Heart left ventricle (tissue), 16 donors: ENCODE measurements at regions of chr11 and their contacts with region 1.

Region 1: GRCh38 chr11:8964324-8965320 is at the start of gene TMEM9B:
- DNase-seq: peak; percentile 92 to 96 (median 95)
- ATAC-seq: peak; percentile 90 to 97 (median 96)
- H3K4me3 ChIP-seq: peak within 1 kb of the TSS; percentile 61 to 97 (median 80)
- H3K27ac ChIP-seq: peak within 1 kb of the TSS; percentile 88 to 99 (median 95)
- H3K4me1 ChIP-seq: peaks cover 0 to 37% (median 25%) of the 10 kb centered on the region in 12 donors
- H3K27me3 ChIP-seq: no peaks in the 10 kb centered on the region
- CTCF ChIP-seq: no peak
- POLR2A ChIP-seq: peak in 1 of 2 donors; percentile 86
- total RNA-seq, gene TMEM9B: 39.9 to 58.3 (median 46.5) TPM

Region 2: GRCh38 chr11:8682303-8683114 is 282.1 kb before region 1 on chr11 and contains the starts of genes RPL27A and TRIM66:
- intact Hi-C with region 1: loop called in 9 of 10 experiments (anchors 5 to 10 kb)
- DNase-seq: peak; percentile 99
- ATAC-seq: peak; percentile 97 to 99 (median 98)
- H3K4me3 ChIP-seq: peak within 1 kb of the TSS; percentile 58 to 100 (median 90)
- H3K27ac ChIP-seq: peak within 1 kb of the TSS; percentile 91 to 98 (median 96)
- H3K4me1 ChIP-seq: peaks cover 0 to 34% (median 22%) of the 10 kb centered on the region in 12 donors
- H3K27me3 ChIP-seq: no peaks in the 10 kb centered on the region
- CTCF ChIP-seq: peak in 6 of 12 donors; percentile 7 to 26 (median 13)
- POLR2A ChIP-seq: peak; percentile 51 to 97
- total RNA-seq, gene RPL27A: 299 to 597 (median 438) TPM
- total RNA-seq, gene TRIM66: 0.71 to 10.1 (median 4.1) TPM

Region 3: GRCh38 chr11:8870411-8871170 is 94.0 kb before region 1 on chr11:
- intact Hi-C with region 1: loop called in 1 of 10 experiments (anchors 2 kb)
- DNase-seq: peak; percentile 56 to 76 (median 69)
- ATAC-seq: peak; percentile 32 to 87 (median 74)
- H3K4me3 ChIP-seq: peak overlapping the region; percentile 43 to 97 (median 83)
- H3K27ac ChIP-seq: peak overlapping the region; percentile 43 to 94 (median 84)
- H3K4me1 ChIP-seq: peaks cover 0 to 55% (median 15%) of the 10 kb centered on the region in 12 donors
- H3K27me3 ChIP-seq: peaks cover 0 to 30% (median 0%) of the 10 kb centered on the region in 9 donors
- CTCF ChIP-seq: peak in 1 of 12 donors; percentile 23
- POLR2A ChIP-seq: no peak

Region 4: DNA sequence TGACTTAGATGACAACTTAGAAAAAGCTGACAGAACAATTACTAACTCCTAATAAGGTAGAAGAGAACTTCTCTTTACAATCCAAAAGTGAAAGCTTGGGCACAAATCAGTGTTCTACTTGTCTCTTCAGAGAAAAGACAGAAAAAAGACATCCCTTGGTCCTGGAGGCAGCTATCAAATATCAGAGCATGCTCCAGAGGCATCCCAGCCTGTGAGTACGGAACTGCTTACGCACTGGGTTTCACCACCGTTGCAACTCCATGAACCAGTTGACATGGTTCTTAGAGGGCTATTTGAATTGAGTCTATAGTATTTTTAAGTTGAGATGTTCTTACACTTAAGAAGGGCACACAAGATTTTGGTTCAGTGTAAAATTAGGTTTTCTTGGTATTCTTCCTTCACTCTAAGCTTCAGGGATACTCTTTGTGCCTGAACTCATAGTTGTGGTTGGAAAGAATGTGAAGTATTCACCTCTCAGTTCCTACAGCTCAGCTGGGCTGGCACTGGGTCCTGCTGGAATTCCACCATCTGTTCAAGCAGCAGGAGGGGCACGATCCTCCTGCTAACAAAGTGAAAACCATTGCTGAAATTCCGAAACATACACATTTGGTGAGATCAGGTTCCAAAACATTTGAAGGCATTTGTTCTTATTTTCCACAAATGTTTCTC is 47.3 kb before region 1 on chr11:
- intact Hi-C with region 1: loop called in 9 of 10 experiments (anchors 2 to 5 kb)
- DNase-seq: peak in 1 of 5 donors; percentile 36
- ATAC-seq: peak in 3 of 4 donors; percentile 39 to 64 (median 59)
- H3K4me3 ChIP-seq: no peak overlapping the region
- H3K27ac ChIP-seq: peak overlapping the region in 7 of 12 donors; percentile 3 to 49 (median 27)
- H3K4me1 ChIP-seq: peaks cover 0 to 41% (median 30%) of the 10 kb centered on the region in 12 donors
- H3K27me3 ChIP-seq: no peaks in the 10 kb centered on the region
- CTCF ChIP-seq: no peak
- POLR2A ChIP-seq: no peak